Cardiac septum (tissue), 1 donor: ENCODE measurements at regions of chr20 and their contacts with region 1.

Region 1: DNA sequence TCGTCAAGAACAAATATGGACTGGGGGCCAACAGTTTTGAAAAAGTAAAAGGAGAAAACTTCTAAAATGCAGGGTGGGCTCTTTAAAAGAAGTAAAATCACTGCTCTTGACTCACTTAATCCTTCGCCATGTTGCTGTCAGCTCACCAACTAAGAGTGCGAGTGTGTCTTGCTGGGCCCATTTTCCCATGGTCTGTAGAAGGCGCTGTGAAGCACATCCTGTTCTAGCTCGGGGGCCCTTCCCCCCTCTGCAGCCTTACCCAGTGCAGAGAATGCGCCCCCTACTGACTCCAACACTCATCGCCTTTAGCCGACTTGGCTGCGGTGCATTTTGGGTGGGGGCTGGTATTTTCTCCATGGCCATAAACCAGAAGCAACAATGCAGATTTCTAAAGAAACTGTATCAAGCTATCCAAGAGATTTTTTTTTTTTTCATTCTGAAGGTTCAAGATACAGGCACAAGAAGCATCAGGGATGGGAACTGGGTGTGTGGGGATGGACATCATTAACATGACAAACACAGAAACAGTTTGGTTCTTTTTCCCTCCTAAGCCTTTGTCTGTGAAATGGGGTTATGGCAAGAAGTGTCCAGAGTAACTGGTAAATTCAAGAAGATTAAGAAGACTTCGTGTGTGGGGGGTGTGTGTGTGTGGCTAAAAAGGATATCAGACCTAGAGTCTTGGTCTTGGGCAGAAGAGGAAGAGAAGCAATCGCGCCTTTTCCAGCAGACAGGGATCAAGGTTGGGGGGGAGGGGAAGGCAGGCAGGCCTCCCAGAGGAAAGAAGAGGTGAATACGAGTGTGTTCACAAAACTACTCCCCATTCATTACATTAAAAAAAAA is 1.7 kb downstream of the ADNP start:
- DNase-seq: peak; percentile 92

Region 2: DNA sequence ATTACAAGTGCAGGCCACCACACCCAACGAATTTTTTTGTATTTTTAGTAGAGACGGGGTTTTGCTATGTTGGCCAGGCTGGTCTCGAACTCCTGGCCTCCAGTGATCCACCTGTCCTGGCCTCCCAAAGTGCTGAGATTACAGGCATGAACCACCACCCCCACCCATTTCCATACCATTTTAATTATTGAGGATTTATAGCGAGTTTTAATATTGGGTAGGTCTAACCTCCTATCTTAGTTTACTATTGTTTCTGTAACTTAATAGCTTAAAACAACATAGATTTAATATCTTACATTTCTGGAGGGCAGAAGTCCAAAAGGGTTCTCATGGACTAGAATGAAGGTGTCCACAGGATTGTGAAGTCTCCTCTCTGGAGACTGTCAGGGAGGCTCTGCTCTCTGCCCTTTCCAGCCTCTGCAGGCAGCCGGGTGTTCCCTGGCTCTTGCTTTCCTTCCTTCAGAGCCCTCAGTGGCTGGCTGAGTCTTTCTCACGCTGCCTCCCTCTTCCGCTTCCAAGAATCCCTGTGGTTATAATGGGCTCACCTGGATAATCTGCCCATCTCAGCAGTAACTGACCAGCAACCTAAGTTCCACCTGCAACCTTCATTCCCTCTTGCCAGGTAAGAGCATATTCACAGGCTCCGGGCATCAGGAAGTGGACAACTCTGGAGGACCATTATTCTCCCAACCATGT is 153.2 kb before region 1 on chr20:
- intact Hi-C with region 1: no loop called
- DNase-seq: no peak

Region 3: GRCh38 chr20:50790651-50791277 is 138.8 kb before region 1 on chr20:
- intact Hi-C with region 1: loop called (anchors 1 kb)
- DNase-seq: peak; percentile 93

Region 4: GRCh38 chr20:50815162-50815989 is 114.1 kb before region 1 on chr20:
- intact Hi-C with region 1: loop called (anchors 5 kb)
- DNase-seq: no peak

Region 5: DNA sequence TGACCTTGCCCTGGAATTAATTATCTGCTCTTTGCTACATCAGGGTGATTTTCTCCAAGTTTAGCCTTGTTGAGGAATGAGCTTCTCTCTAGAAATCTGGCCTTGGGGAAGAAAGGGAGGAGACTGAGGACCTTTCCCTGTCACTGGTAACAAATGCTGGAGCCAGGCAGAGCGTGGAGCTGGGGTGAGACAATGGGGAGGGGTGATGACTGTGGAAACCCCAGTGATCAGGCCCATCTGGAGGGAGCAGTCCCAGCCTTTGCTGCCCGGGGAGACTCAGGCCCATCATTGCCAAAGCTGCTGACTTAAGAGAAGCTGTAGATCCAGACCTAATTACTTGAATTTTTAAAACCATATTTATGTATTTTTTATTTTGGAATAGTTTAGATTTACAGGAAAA is 103.4 kb before region 1 on chr20:
- intact Hi-C with region 1: no loop called
- DNase-seq: no peak

Region 6: GRCh38 chr20:50958615-50959542 is 29.4 kb after region 1 on chr20 and contains the start of gene MOCS3:
- intact Hi-C with region 1: loop called (anchors 1 kb)
- DNase-seq: peak; percentile 92
- total RNA-seq, gene MOCS3: 2.8 TPM